GM10248 (cell line): ENCODE measurements at regions of chr7 and their contacts with region 1.

Region 1: GRCh38 chr7:47945261-47946001 is 2.8 kb downstream of the PKD1L1 start:
- DNase-seq: peak; percentile 59
- CTCF ChIP-seq: peak; percentile 86

Region 2: GRCh38 chr7:47968847-47969774 is 23.7 kb after region 1 on chr7:
- CTCF ChIA-PET with region 1: interaction called, 126 read pairs
- POLR2A ChIA-PET with region 1: interaction called, 5 read pairs
- DNase-seq: peak; percentile 73
- CTCF ChIP-seq: peak; percentile 79

Region 3: DNA sequence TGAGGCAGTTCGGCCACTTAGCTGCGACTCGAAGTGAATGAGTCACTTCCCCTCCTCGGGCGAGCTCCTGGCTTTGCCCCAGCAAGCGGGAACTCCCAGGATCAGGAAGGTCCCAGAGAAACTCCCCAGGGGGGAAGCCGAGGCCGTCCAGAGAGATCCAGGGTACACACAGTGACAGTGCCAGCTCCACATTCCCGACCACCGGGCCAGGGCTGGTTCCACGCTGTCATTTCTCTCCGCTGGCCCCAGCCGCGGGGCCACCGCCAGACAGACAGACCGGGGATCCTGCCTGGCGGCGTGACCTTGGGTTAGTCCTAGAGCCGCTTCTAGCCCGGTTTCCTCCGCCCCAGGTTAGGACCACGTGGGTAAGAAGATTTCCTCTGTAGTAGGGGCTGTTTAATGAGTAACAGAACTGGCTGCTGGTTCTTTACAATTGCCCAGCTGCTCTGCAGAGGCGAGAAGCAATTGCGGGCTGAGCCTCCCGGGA is 143.2 kb after region 1 on chr7:
- CTCF ChIA-PET with region 1: interaction called, 20 read pairs
- POLR2A ChIA-PET with region 1: no interaction called
- DNase-seq: peak; percentile 45
- CTCF ChIP-seq: no peak

Region 4: DNA sequence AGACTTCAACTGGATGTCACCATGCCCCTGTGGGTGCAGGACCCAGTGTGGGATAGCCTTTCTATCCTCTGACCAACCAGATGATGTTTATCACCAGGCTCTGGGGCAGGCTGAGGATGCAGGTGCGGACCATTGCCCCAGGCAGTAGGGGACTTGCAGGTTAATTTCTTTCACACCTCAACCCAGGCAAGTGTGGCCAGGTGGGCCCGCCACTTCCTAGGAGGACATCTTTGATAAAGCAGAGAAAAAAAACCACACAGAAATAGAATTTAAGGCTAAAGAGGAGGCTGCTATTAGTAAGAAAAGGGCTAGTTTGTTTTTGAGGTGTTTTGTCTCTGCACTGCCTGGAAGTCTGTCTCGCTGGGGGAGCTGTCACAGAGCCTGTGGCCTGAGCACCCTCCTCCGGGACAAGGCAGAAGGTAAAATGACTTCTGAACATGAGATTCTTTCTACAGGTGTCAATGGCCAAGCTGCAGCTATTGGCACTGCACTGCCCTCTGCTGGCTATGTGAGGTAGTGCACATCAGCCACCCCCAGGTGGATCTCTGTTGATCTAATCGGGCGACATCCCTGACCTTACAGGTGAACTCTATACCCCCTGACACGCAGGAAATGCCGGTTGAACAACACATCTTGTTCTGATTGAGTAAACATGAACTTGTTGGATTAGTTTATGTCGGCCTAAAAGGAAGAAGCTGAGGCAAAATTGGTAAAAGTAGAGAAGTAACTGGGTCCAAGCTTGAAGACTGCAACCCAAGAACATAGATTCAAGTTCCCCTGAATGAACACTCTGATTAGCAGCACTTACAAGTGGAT is 164.6 kb after region 1 on chr7:
- CTCF ChIA-PET with region 1: interaction called, 187 read pairs
- POLR2A ChIA-PET with region 1: no interaction called
- DNase-seq: peak; percentile 82
- CTCF ChIP-seq: peak; percentile 98

Region 5: GRCh38 chr7:48130658-48131108 is 185.3 kb after region 1 on chr7:
- CTCF ChIA-PET with region 1: interaction called, 10 read pairs
- POLR2A ChIA-PET with region 1: no interaction called
- DNase-seq: no peak
- CTCF ChIP-seq: no peak

Region 6: DNA sequence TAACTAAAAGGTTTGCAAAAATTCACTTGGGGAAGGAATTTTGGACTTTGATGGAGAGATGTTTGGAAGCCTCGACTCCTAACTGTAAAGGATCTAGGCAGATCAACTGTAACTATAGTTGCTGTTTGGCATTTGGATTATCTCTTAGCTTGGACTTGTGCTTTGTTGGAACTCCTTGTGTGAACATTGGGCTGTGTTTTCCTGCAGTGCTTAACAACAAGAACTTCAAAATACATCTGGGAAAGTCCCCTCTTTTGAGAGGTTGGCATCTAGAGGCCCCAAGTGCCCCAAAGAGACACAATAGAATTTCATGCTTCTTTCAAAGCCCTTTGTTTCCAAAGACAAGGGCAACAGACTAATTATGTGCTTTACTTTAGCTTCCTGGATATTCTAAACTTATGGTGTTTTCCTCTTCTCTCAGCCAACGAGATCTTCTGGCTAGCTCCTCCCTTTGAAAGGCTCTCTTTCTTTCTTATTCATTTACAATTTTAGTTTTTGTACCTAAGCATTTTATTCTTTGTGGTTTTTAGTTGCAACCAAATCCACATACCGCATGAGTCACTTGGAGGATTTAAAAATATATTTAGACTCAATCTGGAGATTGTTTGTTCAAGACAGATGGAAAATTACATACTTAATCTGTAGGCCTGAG is 237.4 kb after region 1 on chr7:
- CTCF ChIA-PET with region 1: no interaction called
- POLR2A ChIA-PET with region 1: no interaction called
- DNase-seq: no peak
- CTCF ChIP-seq: no peak